ENCODE measurements at regions of chr14 and their contacts with region 1.

Region 1: GRCh38 chr14:75307700-75308379 is 29.2 kb downstream of the FOS start:
- DNase-seq: peak; percentile 49
- H3K4me3 Mint-ChIP-seq: no peak overlapping the region
- H3K27ac Mint-ChIP-seq: no peak overlapping the region
- H3K4me1 Mint-ChIP-seq: peaks cover 19% of the 10 kb centered on the region
- H3K27me3 Mint-ChIP-seq: no peaks in the 10 kb centered on the region

Region 2: DNA sequence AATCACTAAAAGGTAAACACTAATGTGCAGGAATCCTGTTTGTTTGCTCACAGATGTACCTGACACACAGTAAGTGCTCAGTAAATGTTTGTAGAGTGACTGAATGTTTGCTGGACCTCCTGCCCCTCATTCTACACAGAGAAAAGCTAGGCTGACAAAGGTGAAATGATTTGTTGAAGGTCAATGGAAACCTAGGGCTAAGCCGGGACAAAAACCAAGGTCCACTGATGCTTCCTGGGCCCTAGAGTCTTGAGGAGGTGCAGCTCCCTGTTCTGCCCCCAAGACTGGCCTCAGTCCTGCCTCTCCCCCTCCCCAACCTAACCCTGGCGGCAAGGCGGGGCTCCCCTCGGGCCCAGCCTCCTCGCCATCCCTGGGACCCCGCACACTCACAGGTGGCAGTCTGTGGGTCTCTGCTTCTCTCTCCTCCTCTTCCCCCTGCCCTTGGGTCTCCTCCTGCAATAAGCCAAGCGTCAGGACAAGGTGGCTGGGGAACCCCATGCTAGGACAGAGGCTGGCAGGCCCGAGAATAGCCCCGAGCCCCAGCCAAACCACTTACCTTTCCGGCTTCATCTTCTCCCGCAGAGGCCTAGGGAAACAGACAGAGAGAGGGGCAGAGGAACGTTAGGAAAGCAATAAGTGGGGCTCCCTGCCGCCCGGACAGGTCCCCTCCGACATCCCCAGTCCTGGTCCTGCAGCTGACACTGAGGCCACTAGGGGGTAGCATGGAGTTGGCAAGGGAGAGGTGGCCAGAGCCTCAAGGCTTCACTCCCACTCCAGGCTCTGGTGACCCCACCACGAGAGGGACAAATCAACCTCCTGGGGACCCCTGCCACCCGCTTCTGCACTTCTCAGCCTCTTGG is 361.8 kb before region 1 on chr14:
- intact Hi-C with region 1: loop called (anchors 10 kb)
- DNase-seq: peak; percentile 63
- H3K4me3 Mint-ChIP-seq: no peak overlapping the region
- H3K27ac Mint-ChIP-seq: no peak overlapping the region
- H3K4me1 Mint-ChIP-seq: peaks cover 23% of the 10 kb centered on the region
- H3K27me3 Mint-ChIP-seq: no peaks in the 10 kb centered on the region

Region 3: GRCh38 chr14:75132382-75133086 is 175.3 kb before region 1 on chr14:
- intact Hi-C with region 1: loop called (anchors 1 kb)
- DNase-seq: peak; percentile 40
- H3K4me3 Mint-ChIP-seq: no peak overlapping the region
- H3K27ac Mint-ChIP-seq: no peak overlapping the region
- H3K4me1 Mint-ChIP-seq: peaks cover 22% of the 10 kb centered on the region
- H3K27me3 Mint-ChIP-seq: no peaks in the 10 kb centered on the region

Region 4: DNA sequence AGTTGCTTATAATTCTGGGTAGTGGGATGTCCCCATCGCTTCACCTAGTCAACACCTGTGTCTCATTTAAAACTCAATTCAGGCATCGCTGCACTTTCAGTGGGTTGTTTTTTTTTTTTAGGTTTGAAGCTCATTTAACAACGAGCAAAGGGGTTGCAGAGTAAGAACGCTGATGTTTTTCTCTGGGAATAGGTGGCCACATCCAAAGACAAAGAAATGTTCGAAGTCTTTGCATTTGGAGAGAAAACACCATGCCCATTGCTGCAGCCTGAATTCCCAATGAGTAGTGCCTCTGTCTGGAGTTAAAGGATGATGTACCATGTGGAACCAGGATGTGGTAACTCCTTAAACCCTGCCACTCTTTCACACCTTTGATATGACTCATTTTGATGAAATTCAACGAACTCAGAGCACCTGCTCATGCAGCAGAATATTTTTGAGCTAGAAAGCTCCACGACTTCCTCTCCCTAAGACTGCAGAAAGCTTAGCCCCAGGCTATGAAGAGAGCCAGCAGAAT is 179.4 kb after region 1 on chr14:
- intact Hi-C with region 1: loop called (anchors 1 kb)
- DNase-seq: peak; percentile 25
- H3K4me3 Mint-ChIP-seq: no peak overlapping the region
- H3K27ac Mint-ChIP-seq: no peak overlapping the region
- H3K4me1 Mint-ChIP-seq: peaks cover 38% of the 10 kb centered on the region
- H3K27me3 Mint-ChIP-seq: no peaks in the 10 kb centered on the region

Region 5: GRCh38 chr14:75566321-75566720 is 258.5 kb after region 1 on chr14:
- intact Hi-C with region 1: loop called (anchors 5 kb)
- DNase-seq: peak; percentile 72
- H3K4me3 Mint-ChIP-seq: peak overlapping the region; percentile 47
- H3K27ac Mint-ChIP-seq: peak overlapping the region; percentile 85
- H3K4me1 Mint-ChIP-seq: peaks cover 65% of the 10 kb centered on the region
- H3K27me3 Mint-ChIP-seq: no peaks in the 10 kb centered on the region

Region 6: GRCh38 chr14:75654127-75654732 is 346.4 kb after region 1 on chr14:
- intact Hi-C with region 1: loop called (anchors 1 kb)
- DNase-seq: peak; percentile 69
- H3K4me3 Mint-ChIP-seq: no peak overlapping the region
- H3K27ac Mint-ChIP-seq: peak overlapping the region; percentile 53
- H3K4me1 Mint-ChIP-seq: peaks cover 14% of the 10 kb centered on the region
- H3K27me3 Mint-ChIP-seq: no peaks in the 10 kb centered on the region